ENCODE measurements at regions of chr1 and their contacts with region 1.

Region 1: DNA sequence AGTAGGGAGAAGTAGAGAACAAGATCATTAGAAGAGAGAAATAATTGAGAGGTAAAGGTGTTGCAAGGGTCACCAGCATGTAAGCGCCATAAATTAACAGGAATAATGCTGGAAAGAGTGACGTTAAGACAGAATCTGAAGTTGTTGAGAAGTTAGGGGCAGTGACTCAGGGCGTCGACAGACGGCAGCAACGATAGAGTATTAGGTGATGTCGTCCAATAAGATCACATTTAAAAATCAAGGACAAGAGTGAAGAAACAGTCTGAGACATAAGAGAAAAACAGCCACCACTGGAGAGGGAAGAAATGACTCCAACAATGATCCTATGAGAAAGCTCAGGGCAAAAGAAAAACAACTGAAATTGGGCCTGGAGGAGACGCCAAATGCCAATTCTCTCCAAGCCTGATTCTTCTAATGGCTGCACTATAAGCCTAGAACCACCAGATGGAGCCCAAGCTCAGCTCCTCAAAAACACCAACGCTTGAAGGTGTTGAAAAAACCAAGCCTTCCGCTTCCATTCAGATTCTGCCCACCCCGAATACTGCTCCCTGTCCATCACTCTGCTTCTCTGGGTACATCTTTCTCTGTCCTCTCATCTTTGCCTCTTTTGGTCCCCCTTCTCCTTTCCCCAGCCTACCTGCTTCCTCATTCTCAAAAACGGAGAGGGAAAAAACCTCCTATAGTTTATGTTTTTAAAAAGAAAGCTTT is 70.0 kb downstream of the LUZP1 start:
- DNase-seq: peak; percentile 49
- H3K4me3 Mint-ChIP-seq: no peak overlapping the region
- H3K27ac Mint-ChIP-seq: peak overlapping the region; percentile 5
- H3K4me1 Mint-ChIP-seq: peaks cover 48% of the 10 kb centered on the region
- H3K27me3 Mint-ChIP-seq: no peaks in the 10 kb centered on the region

Region 2: GRCh38 chr1:23019094-23019862 is 79.3 kb before region 1 on chr1 and contains the start of gene KDM1A:
- intact Hi-C with region 1: loop called (anchors 2 kb)
- DNase-seq: peak; percentile 89
- H3K4me3 Mint-ChIP-seq: peak within 1 kb of the TSS; percentile 96
- H3K27ac Mint-ChIP-seq: peak within 1 kb of the TSS; percentile 91
- H3K4me1 Mint-ChIP-seq: peaks cover 37% of the 10 kb centered on the region
- H3K27me3 Mint-ChIP-seq: peaks cover 12% of the 10 kb centered on the region
- total RNA-seq, gene KDM1A: 79.9 and 80.8 TPM in 2 replicates

Region 3: DNA sequence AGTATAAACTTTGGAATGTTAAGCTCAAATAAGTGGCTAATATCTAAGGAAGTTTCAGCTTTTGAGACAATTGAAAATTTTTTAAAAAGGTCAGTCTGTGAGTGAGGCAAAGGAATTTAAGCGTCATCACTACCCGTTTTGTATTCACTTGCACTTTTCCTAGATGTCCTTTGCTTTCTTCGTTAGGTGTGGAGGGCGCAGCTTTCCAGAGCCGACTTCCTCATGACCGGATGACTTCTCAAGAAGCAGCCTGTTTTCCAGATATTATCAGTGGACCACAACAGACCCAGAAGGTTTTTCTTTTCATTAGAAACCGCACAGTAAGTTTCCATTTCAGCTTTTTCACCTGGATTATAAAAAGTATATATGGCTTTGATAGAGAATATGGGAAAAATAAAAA is 48.4 kb before region 1 on chr1:
- intact Hi-C with region 1: no loop called
- DNase-seq: no peak
- H3K4me3 Mint-ChIP-seq: no peak overlapping the region
- H3K27ac Mint-ChIP-seq: no peak overlapping the region
- H3K4me1 Mint-ChIP-seq: peaks cover 16% of the 10 kb centered on the region
- H3K27me3 Mint-ChIP-seq: no peaks in the 10 kb centered on the region

Region 4: GRCh38 chr1:23148084-23148483 is 49.5 kb after region 1 on chr1:
- intact Hi-C with region 1: loop called (anchors 1 kb)
- DNase-seq: no peak
- H3K4me3 Mint-ChIP-seq: peak overlapping the region; percentile 38
- H3K27ac Mint-ChIP-seq: peak overlapping the region; percentile 81
- H3K4me1 Mint-ChIP-seq: peaks cover 30% of the 10 kb centered on the region
- H3K27me3 Mint-ChIP-seq: no peaks in the 10 kb centered on the region

Region 5: GRCh38 chr1:23184212-23184934 is 85.8 kb after region 1 on chr1:
- intact Hi-C with region 1: loop called (anchors 1 kb)
- DNase-seq: peak; percentile 17
- H3K4me3 Mint-ChIP-seq: peak overlapping the region; percentile 49
- H3K27ac Mint-ChIP-seq: no peak overlapping the region
- H3K4me1 Mint-ChIP-seq: peaks cover 12% of the 10 kb centered on the region
- H3K27me3 Mint-ChIP-seq: peaks cover 14% of the 10 kb centered on the region

Region 6: DNA sequence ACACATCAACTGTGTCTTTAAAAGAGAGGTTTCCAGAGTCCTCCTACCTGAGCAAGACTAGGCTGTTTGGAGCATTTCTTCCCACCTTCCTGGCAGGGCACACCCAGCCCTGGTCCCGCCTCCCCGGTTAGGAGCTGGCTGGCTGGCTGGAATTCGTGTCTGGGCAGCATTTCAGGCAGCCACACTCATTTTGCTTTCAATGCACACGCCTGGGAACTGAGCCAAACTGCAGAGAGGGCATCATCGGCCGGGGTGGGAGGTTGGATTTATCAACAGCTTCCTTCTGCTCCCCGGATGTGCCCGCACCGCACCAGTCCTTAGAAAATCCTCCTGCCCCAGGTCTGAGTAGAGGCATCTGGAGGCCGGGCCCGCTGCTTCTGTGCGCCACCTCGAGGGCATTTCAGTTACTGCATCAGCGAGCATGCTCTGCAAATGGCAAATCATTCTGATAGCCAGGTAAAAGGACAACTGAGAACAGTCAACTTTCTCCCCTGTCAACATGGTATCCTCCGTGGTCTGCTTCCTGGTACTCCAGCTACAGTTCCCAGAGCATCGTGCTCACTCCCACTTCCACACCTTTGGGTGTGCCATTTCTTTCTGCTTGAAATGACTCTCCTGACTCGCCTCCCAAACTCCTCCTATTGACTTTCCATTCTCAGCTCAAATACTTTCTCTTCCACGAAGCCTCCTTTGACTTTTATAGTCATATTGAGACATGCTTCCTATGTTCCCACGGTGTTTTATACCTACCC is 305.3 kb after region 1 on chr1:
- intact Hi-C with region 1: loop called (anchors 1 kb)
- DNase-seq: peak; percentile 72
- H3K4me3 Mint-ChIP-seq: no peak overlapping the region
- H3K27ac Mint-ChIP-seq: no peak overlapping the region
- H3K4me1 Mint-ChIP-seq: peaks cover 12% of the 10 kb centered on the region
- H3K27me3 Mint-ChIP-seq: no peaks in the 10 kb centered on the region